Activated T-helper 2 cell treated with anti-CD3 and anti-CD28 coated beads, Interferon-gamma antibody, Interleukin-2, Interleukin-4, amounts not matched to agents 10 μg/mL and 5 μg/mL and 100 μg/mL, durations not matched to agents 14 hours and 24 hours and 36 hours (primary cell): ENCODE measurements at regions of chr11 and their contacts with region 1.

Region 1: GRCh38 chr11:60265373-60266214 is 14.9 kb upstream of the MS4A4A start:
- DNase-seq: no peak
- H3K4me3 Mint-ChIP-seq: no peak overlapping the region
- H3K27ac Mint-ChIP-seq: no peak overlapping the region
- H3K4me1 Mint-ChIP-seq: no peaks in the 10 kb centered on the region
- H3K27me3 Mint-ChIP-seq: peaks cover 4% of the 10 kb centered on the region

Region 2: GRCh38 chr11:60305906-60306619 is 40.5 kb after region 1 on chr11:
- intact Hi-C with region 1: loop called (anchors 5 kb)
- DNase-seq: no peak
- H3K4me3 Mint-ChIP-seq: no peak overlapping the region
- H3K27ac Mint-ChIP-seq: no peak overlapping the region
- H3K4me1 Mint-ChIP-seq: peaks cover 5% of the 10 kb centered on the region
- H3K27me3 Mint-ChIP-seq: peaks cover 6% of the 10 kb centered on the region

Region 3: DNA sequence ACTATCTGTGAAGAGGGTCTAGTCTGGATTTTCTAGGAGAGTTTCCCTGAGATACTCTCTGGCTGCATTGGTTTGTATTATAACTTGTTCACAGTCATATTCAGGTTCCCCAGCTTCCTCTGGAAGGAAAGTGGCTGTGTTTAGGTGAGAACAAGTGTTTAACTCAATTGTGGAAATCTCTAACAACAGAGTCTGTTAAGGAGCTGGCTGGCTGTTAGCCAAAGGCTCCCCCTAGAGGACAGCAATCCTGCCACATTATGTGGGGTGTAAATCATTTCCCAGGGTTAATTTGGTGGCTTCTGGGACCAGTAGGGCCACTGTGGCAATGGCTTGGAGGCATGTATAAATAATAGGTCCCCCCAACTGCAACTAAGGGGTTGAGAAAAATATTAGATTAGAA is 79.9 kb after region 1 on chr11:
- intact Hi-C with region 1: loop called (anchors 5 kb)
- DNase-seq: no peak
- H3K4me3 Mint-ChIP-seq: no peak overlapping the region
- H3K27ac Mint-ChIP-seq: no peak overlapping the region
- H3K4me1 Mint-ChIP-seq: no peaks in the 10 kb centered on the region
- H3K27me3 Mint-ChIP-seq: peaks cover 4% of the 10 kb centered on the region